Gastrocnemius medialis (tissue), 4 donors: ENCODE measurements at regions of chr6 and their contacts with region 1.

Region 1: GRCh38 chr6:17808609-17809008 is 101.9 kb upstream of the NUP153 start:
- DNase-seq: no peak
- ATAC-seq: no peak
- H3K4me3 ChIP-seq: no peak overlapping the region
- H3K27ac ChIP-seq: no peak overlapping the region
- H3K4me1 ChIP-seq: no peaks in the 10 kb centered on the region
- H3K27me3 ChIP-seq: no peaks in the 10 kb centered on the region
- CTCF ChIP-seq: no peak
- POLR2A ChIP-seq: no peak

Region 2: DNA sequence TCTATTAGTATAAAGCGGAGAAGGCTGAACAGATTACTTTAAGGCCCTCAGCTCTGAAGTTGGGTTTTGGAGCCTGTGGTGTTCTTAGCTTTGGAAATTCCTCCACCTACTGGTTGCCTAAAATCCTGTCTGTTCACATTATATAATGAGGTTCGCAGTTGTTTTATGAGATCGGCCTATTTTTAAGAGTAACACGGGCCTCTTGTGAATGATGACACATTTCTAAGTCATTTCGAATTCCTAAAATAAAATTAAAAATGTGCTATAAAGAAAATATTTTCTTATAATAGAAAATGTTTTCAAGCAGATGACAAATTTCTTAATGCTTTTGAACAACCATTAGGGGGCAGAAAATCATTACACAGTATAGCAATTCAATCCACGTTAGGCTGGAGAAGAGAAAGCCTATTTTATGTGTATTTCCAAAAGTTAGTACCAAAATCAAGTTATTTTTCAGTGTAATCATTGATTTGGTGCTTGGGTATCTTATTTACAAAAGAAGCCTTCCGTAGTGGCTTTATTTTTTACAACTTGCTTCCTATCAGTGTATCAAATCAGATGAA is 224.3 kb before region 1 on chr6:
- in situ Hi-C with region 1: loop called in 1 of 4 experiments (anchors 10 kb)
- intact Hi-C with region 1: loop called (anchors 1 kb)
- DNase-seq: peak in 1 of 2 donors; percentile 33
- ATAC-seq: peak; percentile 92 to 93
- H3K4me3 ChIP-seq: peak overlapping the region; percentile 2 to 48 (median 32)
- H3K27ac ChIP-seq: peak overlapping the region; percentile 66 to 85 (median 75)
- H3K4me1 ChIP-seq: peaks cover 7 to 8% of the 10 kb centered on the region in 2 donors
- H3K27me3 ChIP-seq: no peaks in the 10 kb centered on the region
- CTCF ChIP-seq: peak; percentile 78 to 97 (median 86)
- POLR2A ChIP-seq: no peak

Region 3: GRCh38 chr6:17599885-17600526 is 208.6 kb before region 1 on chr6 and contains the start of gene FAM8A1:
- in situ Hi-C with region 1: loop called in 1 of 4 experiments (anchors 10 kb)
- intact Hi-C with region 1: no loop called
- DNase-seq: peak; percentile 95 to 97
- ATAC-seq: peak; percentile 93 to 96
- H3K4me3 ChIP-seq: peak within 1 kb of the TSS; percentile 77 to 98 (median 86)
- H3K27ac ChIP-seq: peak within 1 kb of the TSS; percentile 89 to 99 (median 94)
- H3K4me1 ChIP-seq: peaks cover 11 to 13% of the 10 kb centered on the region in 2 donors
- H3K27me3 ChIP-seq: no peaks in the 10 kb centered on the region
- CTCF ChIP-seq: peak; percentile 60 to 75 (median 69)
- POLR2A ChIP-seq: peak; percentile 84 to 85
- total RNA-seq, gene FAM8A1: 22.7 to 37.3 (median 27.5) TPM

Region 4: DNA sequence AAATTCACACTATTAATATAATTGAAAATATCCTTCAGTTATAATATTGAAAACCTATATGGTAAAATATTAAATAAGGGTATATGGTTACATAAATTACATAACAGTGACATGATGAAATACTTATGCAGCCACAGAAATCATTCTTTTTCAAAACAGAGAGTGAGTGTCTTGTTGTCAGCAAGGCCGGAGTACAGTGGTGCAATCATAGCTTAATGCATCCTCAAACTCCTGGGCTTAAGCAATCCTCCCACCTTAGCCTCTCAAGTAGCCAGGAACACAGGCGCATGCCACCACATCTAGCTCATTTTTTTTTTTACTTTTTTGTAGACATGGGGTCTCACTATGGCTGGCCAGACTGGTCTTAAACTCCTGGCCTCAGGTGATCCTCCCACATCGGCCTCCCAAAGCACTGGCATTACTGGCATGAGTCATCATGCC is 168.1 kb before region 1 on chr6:
- in situ Hi-C with region 1: no loop called
- intact Hi-C with region 1: no loop called
- DNase-seq: no peak
- ATAC-seq: no peak
- H3K4me3 ChIP-seq: no peak overlapping the region
- H3K27ac ChIP-seq: no peak overlapping the region
- H3K4me1 ChIP-seq: peaks cover 6 to 9% of the 10 kb centered on the region in 2 donors
- H3K27me3 ChIP-seq: no peaks in the 10 kb centered on the region
- CTCF ChIP-seq: no peak
- POLR2A ChIP-seq: no peak

Region 5: GRCh38 chr6:17666646-17667045 is 142.0 kb before region 1 on chr6:
- in situ Hi-C with region 1: no loop called
- intact Hi-C with region 1: loop called (anchors 10 kb)
- DNase-seq: no peak
- ATAC-seq: no peak
- H3K4me3 ChIP-seq: no peak overlapping the region
- H3K27ac ChIP-seq: no peak overlapping the region
- H3K4me1 ChIP-seq: no peaks in the 10 kb centered on the region
- H3K27me3 ChIP-seq: no peaks in the 10 kb centered on the region
- CTCF ChIP-seq: no peak
- POLR2A ChIP-seq: no peak